Panc1 (cell line): ENCODE measurements at regions of chr2 and their contacts with region 1.

Region 1: GRCh38 chr2:193963472-193964119 is 1693.4 kb upstream of the SLC39A10 start:
- DNase-seq: peak; percentile 12
- ATAC-seq: no peak
- H3K4me3 ChIP-seq: no peak overlapping the region
- H3K27ac ChIP-seq: no peak overlapping the region
- H3K4me1 ChIP-seq: no peaks in the 10 kb centered on the region; the same call in 1 of the 2 replicates
- H3K27me3 ChIP-seq: no peaks in the 10 kb centered on the region
- CTCF ChIP-seq: peak; percentile 54; the same call in 1 of the 2 replicates

Region 2: GRCh38 chr2:193695367-193695766 is 268.2 kb before region 1 on chr2:
- CTCF ChIA-PET with region 1: no interaction called
- POLR2A ChIA-PET with region 1: no interaction called
- in situ Hi-C with region 1: no loop called
- intact Hi-C with region 1: loop called (anchors 10 kb)
- DNase-seq: no peak
- ATAC-seq: no peak
- H3K4me3 ChIP-seq: no peak overlapping the region
- H3K27ac ChIP-seq: no peak overlapping the region
- H3K4me1 ChIP-seq: no peaks in the 10 kb centered on the region
- H3K27me3 ChIP-seq: no peaks in the 10 kb centered on the region
- CTCF ChIP-seq: peak; percentile 31; the same call in 1 of the 2 replicates